ENCODE measurements at regions of chr6 and their contacts with region 1.

Region 1: DNA sequence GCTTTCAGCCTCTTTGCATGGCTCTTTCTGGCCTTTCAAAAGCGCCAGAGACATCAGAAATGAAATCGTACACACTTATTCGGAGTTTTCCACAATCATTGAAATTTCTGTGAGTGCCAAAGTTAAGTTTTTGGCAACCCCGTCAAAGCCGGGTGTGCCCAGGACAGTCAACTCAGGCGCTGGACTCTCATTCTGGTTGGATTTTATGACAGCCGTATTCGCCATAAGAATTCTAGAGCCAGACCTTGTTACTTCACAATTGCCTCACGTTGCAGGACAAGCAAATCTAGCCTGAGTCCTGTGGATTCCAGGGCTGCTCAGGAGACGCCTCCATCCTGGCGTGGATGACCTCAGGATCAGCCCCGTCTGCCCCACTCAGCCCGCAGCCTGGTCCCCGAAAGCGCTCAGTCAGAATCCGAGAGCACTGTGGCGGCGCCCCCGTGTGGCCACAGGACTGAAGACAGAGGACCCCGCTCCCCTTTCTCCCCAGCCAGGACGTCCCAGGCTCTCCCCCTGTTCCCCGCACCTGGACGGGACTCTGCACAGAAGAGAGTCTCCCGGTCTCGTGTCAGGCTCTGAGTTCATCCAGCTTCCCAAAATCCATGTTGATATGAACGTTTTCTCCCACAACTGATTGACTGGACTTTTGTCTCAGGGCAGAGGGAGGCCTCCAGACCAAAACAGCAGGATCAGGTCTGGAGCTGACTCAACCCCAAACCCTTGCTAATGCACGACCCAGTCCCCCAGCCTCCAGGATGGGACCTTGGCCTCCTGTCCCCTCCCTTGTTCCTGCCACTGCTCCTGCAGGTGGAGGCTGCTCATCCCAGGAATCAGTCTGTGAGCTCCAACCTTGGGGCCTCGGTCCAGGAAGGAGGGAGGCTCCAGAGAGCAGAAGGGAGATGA is 38.2 kb downstream of the MICA start:
- DNase-seq: peak; percentile 78 to 97
- H3K4me3 ChIP-seq: no peak overlapping the region
- CTCF ChIP-seq: peak in 1 of 3 donors; percentile 72
- POLR2A ChIP-seq: no peak

Region 2: DNA sequence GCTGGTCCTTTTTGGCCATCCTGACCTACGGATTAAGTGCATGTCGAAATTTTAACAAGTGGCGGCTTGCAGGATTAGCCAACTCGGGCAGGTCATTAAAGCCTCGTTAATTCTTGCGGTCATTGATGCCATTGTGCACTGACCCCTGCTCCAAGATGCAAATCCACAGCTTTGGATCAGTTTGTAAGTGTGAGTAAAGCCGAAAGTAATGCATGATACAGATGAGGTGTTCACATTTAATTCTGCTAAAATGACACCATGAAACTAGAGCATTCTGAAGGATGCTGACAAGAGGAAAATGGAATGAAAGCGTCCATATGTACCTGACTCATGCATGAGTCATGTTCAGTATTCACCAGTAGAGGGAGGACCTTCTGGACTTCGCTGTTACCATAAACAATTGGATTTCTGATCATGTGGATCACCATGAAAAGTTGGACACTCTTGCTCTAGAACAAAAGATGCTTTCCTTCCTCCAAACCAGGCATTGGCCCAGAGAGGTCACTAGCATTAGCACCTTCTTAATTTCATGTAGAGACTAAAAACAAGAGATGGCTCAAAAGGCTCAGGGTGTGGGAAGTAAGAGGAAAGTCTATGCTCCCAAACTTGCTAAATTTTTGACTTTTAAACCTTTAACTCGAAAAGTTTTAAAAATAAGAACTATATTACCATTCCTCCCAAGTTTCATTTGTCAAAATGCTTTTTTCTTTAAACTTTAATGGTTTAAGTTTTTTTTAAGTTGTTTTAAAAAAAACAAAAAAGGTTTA is 383.3 kb before region 1 on chr6:
- intact Hi-C with region 1: no loop called
- DNase-seq: no peak
- H3K4me3 ChIP-seq: no peak overlapping the region
- CTCF ChIP-seq: no peak
- POLR2A ChIP-seq: no peak

Region 3: GRCh38 chr6:31383149-31383548 is 58.5 kb before region 1 on chr6:
- intact Hi-C with region 1: no loop called
- DNase-seq: no peak
- H3K4me3 ChIP-seq: no peak overlapping the region
- CTCF ChIP-seq: no peak
- POLR2A ChIP-seq: no peak

Region 4: DNA sequence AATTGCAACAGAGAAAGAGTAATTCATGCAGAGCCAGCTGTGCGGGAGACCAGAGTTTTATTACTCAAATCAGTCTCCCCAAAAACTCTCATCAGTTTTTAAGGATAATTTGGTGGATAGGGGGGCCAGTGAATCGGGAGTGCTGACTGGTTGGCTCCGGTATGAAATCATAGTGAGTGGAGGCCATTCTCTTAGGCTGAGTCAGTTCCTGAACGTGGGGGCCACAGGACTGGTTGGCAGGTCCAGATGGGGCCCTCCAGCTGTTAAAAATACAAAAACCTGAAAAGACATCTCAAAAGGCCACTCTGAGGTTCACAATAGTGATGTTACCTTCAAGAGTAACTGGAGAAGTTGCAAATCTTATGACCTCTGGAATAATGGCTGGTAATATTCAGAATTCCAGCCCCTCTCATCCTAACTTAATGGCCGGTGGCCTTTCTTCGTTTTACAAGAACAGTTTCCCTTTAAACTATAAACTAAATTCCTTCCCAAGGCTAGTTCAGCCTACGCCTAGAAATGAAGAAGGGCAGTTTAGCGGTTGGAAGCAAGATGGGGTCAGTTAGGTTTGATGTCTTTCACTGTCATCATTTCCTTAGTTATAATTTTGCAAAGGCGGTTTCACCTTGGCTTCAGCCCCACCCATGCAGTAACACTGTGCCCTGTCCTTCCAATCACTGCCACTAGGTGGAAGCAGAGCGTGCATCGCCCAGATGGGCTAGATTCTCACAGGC is 45.0 kb before region 1 on chr6:
- intact Hi-C with region 1: loop called (anchors 2 kb)
- DNase-seq: peak; percentile 86 to 96
- H3K4me3 ChIP-seq: no peak overlapping the region
- CTCF ChIP-seq: peak in 1 of 3 donors; percentile 45
- POLR2A ChIP-seq: no peak

Measured in lower leg skin (tissue), 4 donors.